GM10248 (cell line): ENCODE measurements at regions of chr16 and their contacts with region 1.

Region 1: GRCh38 chr16:48632137-48632774 is 22.3 kb upstream of the N4BP1 start:
- DNase-seq: peak; percentile 38
- CTCF ChIP-seq: no peak

Region 2: GRCh38 chr16:48291303-48291702 is 341.0 kb before region 1 on chr16:
- CTCF ChIA-PET with region 1: interaction called, 10 read pairs
- POLR2A ChIA-PET with region 1: no interaction called
- DNase-seq: no peak
- CTCF ChIP-seq: no peak

Region 3: DNA sequence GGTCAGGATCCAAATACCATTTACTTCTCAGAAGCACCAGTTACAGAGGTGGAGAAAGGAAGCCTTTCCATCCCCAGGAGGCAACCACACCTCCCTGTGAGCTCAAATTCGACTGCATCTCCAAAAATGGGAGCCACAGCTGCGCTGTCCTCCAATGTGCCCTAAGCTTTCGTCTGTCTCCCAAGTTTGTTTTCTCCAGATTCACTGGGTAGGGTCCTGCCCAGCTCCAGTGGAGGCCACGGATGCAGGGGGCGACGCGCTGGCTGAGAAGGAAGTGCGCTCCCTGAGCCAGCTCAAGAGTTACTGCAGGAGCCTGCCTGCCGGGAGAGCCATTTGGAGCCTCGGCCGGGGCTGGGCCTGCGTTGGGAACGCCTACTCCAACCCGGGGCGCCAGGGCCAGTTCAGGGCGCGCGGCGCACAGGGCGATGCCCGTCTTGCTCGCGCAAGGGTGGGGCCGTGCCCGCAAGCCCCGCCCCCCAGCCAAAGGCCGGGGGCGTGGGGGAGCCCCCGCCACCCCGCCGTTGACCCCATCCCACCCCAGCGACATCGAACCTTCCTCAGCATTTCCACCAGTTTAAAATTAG is 266.6 kb before region 1 on chr16:
- CTCF ChIA-PET with region 1: interaction called, 10 read pairs
- POLR2A ChIA-PET with region 1: no interaction called
- DNase-seq: peak; percentile 86
- CTCF ChIP-seq: no peak

Region 4: GRCh38 chr16:48603647-48604376 is 28.4 kb before region 1 on chr16:
- CTCF ChIA-PET with region 1: interaction called, 11 read pairs
- POLR2A ChIA-PET with region 1: no interaction called
- DNase-seq: no peak
- CTCF ChIP-seq: no peak

Region 5: GRCh38 chr16:48617711-48618148 is 14.5 kb before region 1 on chr16:
- CTCF ChIA-PET with region 1: interaction called, 22 read pairs
- POLR2A ChIA-PET with region 1: no interaction called
- DNase-seq: no peak
- CTCF ChIP-seq: no peak

Region 6: DNA sequence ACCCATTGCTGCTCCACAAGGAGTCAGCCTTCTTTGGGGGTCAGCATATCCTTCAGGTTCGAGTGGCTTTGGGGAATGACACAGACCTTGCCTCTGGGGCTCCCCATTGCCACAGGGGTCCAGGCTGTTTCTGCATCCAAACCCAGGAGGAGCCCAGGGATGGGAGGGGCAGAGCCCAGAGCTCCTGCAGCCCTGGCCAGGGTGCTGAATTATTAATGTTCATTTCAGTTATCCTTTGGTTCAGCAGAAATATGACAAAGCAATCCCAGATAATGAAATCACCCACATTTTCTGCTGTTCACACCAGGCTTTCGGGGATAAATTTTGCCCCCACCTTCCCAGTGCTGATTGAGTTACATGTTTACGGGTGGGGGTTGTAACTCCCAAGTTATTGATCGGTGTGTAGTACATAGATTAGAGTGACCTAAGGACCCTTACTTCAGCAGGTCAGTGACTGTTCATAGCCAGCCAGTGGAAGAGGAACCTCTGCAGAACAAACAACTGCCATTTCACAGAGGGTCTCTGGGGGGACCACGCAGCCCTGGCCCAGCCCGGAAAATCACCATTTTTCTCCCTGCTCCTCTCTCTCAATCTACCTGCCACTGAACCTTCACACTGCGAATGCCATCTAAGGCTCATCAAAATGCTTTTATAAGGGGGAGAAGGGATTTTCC is 218.0 kb after region 1 on chr16:
- CTCF ChIA-PET with region 1: no interaction called
- POLR2A ChIA-PET with region 1: no interaction called
- DNase-seq: no peak
- CTCF ChIP-seq: no peak